ENCODE measurements at regions of chr10 and their contacts with region 1.

Region 1: GRCh38 chr10:75235375-75236177 is at the start of gene COMTD1:
- DNase-seq: peak; percentile 90 to 96 (median 92)
- ATAC-seq: peak; percentile 66
- H3K4me3 ChIP-seq: peak within 1 kb of the TSS; percentile 68 to 73
- H3K4me3 Mint-ChIP-seq: peak within 1 kb of the TSS; percentile 82
- H3K27ac ChIP-seq: peak within 1 kb of the TSS; percentile 52 to 66
- H3K27ac Mint-ChIP-seq: peak within 1 kb of the TSS; percentile 80
- H3K4me1 ChIP-seq: peaks cover 14% of the 10 kb centered on the region
- H3K4me1 Mint-ChIP-seq: peaks cover 20% of the 10 kb centered on the region
- H3K27me3 ChIP-seq: no peaks in the 10 kb centered on the region
- H3K27me3 Mint-ChIP-seq: no peaks in the 10 kb centered on the region
- CTCF ChIP-seq: peak; percentile 100
- total RNA-seq, gene COMTD1: 7.6 to 7.9 TPM

Region 2: GRCh38 chr10:73874267-73875138 is 1361.1 kb before region 1 on chr10 and contains the start of gene CAMK2G:
- CTCF ChIA-PET with region 1: no interaction called
- POLR2A ChIA-PET with region 1: no interaction called
- intact Hi-C with region 1: loop called in 1 of 2 experiments (anchors 2 kb)
- DNase-seq: peak; percentile 55 to 93 (median 81)
- ATAC-seq: peak; percentile 72
- H3K4me3 ChIP-seq: peak within 1 kb of the TSS; percentile 93 to 95
- H3K4me3 Mint-ChIP-seq: peak within 1 kb of the TSS; percentile 87
- H3K27ac ChIP-seq: peak within 1 kb of the TSS; percentile 57 to 82
- H3K27ac Mint-ChIP-seq: peak within 1 kb of the TSS; percentile 90
- H3K4me1 ChIP-seq: peaks cover 60% of the 10 kb centered on the region
- H3K4me1 Mint-ChIP-seq: peaks cover 75% of the 10 kb centered on the region
- H3K27me3 ChIP-seq: no peaks in the 10 kb centered on the region
- H3K27me3 Mint-ChIP-seq: no peaks in the 10 kb centered on the region
- CTCF ChIP-seq: no peak
- total RNA-seq, gene CAMK2G: 28.4 to 28.9 TPM

Region 3: DNA sequence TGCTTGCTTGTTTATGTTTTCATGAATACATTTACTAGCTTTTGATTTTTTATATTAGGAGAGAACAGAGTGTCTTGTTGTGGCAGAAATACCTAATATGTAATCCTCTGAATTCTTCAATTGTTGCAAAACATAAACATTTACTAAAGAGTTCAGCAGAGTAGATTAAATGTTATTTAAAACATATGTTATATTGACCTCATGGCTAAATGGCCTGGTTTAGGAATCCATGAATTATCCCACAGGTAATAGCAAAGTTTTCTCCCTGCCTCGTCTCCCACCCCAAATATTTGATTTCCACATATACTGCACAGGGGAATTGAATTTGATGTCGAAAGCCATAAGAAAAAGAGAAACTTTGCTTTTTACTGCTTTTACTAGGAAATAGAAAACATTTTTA is 972.7 kb before region 1 on chr10:
- CTCF ChIA-PET with region 1: interaction called, 4 read pairs
- POLR2A ChIA-PET with region 1: no interaction called
- intact Hi-C with region 1: loop called (anchors 1 kb)
- DNase-seq: no peak
- ATAC-seq: no peak
- H3K4me3 ChIP-seq: no peak overlapping the region
- H3K4me3 Mint-ChIP-seq: no peak overlapping the region
- H3K27ac ChIP-seq: no peak overlapping the region
- H3K27ac Mint-ChIP-seq: peak overlapping the region; percentile 58
- H3K4me1 ChIP-seq: no peaks in the 10 kb centered on the region
- H3K4me1 Mint-ChIP-seq: peaks cover 7% of the 10 kb centered on the region
- H3K27me3 ChIP-seq: no peaks in the 10 kb centered on the region
- H3K27me3 Mint-ChIP-seq: no peaks in the 10 kb centered on the region
- CTCF ChIP-seq: no peak

Region 4: GRCh38 chr10:74738985-74739567 is 496.5 kb before region 1 on chr10:
- CTCF ChIA-PET with region 1: no interaction called
- POLR2A ChIA-PET with region 1: no interaction called
- intact Hi-C with region 1: loop called in 1 of 2 experiments (anchors 5 kb)
- DNase-seq: peak in 6 of 9 experiments; percentile 2 to 68 (median 44)
- ATAC-seq: peak; percentile 71
- H3K4me3 ChIP-seq: no peak overlapping the region
- H3K4me3 Mint-ChIP-seq: peak overlapping the region; percentile 56
- H3K27ac ChIP-seq: peak overlapping the region in 1 of 2 experiments; percentile 59
- H3K27ac Mint-ChIP-seq: peak overlapping the region; percentile 86
- H3K4me1 ChIP-seq: peaks cover 19% of the 10 kb centered on the region
- H3K4me1 Mint-ChIP-seq: peaks cover 26% of the 10 kb centered on the region
- H3K27me3 ChIP-seq: no peaks in the 10 kb centered on the region
- H3K27me3 Mint-ChIP-seq: no peaks in the 10 kb centered on the region
- CTCF ChIP-seq: peak; percentile 33

Region 5: GRCh38 chr10:75210282-75211006 is 25.1 kb before region 1 on chr10 and contains the start of gene VDAC2:
- CTCF ChIA-PET with region 1: interaction called, 115 read pairs
- POLR2A ChIA-PET with region 1: interaction called, 55 read pairs
- intact Hi-C with region 1: loop called (anchors 1 kb)
- DNase-seq: peak; percentile 93 to 99 (median 96)
- ATAC-seq: peak; percentile 89
- H3K4me3 ChIP-seq: peak within 1 kb of the TSS; percentile 90 to 93
- H3K4me3 Mint-ChIP-seq: peak within 1 kb of the TSS; percentile 97
- H3K27ac ChIP-seq: peak within 1 kb of the TSS; percentile 99 to 100
- H3K27ac Mint-ChIP-seq: peak within 1 kb of the TSS; percentile 100
- H3K4me1 ChIP-seq: peaks cover 28% of the 10 kb centered on the region
- H3K4me1 Mint-ChIP-seq: peaks cover 26% of the 10 kb centered on the region
- H3K27me3 ChIP-seq: no peaks in the 10 kb centered on the region
- H3K27me3 Mint-ChIP-seq: no peaks in the 10 kb centered on the region
- CTCF ChIP-seq: no peak
- total RNA-seq, gene VDAC2: 184 to 187 TPM

Region 6: GRCh38 chr10:76902949-76903348 is 1667.4 kb after region 1 on chr10:
- CTCF ChIA-PET with region 1: no interaction called
- POLR2A ChIA-PET with region 1: no interaction called
- intact Hi-C with region 1: no loop called
- DNase-seq: no peak
- ATAC-seq: no peak
- H3K4me3 ChIP-seq: no peak overlapping the region
- H3K4me3 Mint-ChIP-seq: no peak overlapping the region
- H3K27ac ChIP-seq: no peak overlapping the region
- H3K27ac Mint-ChIP-seq: no peak overlapping the region
- H3K4me1 ChIP-seq: no peaks in the 10 kb centered on the region
- H3K4me1 Mint-ChIP-seq: no peaks in the 10 kb centered on the region
- H3K27me3 ChIP-seq: no peaks in the 10 kb centered on the region
- H3K27me3 Mint-ChIP-seq: no peaks in the 10 kb centered on the region
- CTCF ChIP-seq: no peak

Measured in CD8-positive, alpha-beta T cell (primary cell).